Activated CD4-positive, alpha-beta T cell treated with anti-CD3 and anti-CD28 coated beads for 36 hours (primary cell): ENCODE measurements at regions of chr5 and their contacts with region 1.

Region 1: GRCh38 chr5:9644630-9645029 is 14.5 kb upstream of the TAS2R1 start:
- DNase-seq: no peak
- ATAC-seq: no peak
- H3K4me3 Mint-ChIP-seq: no peak overlapping the region
- H3K27ac Mint-ChIP-seq: no peak overlapping the region
- H3K4me1 Mint-ChIP-seq: no peaks in the 10 kb centered on the region
- H3K27me3 Mint-ChIP-seq: no peaks in the 10 kb centered on the region

Region 2: GRCh38 chr5:8135742-8136141 is 1508.9 kb before region 1 on chr5:
- CTCF ChIA-PET with region 1: no interaction called
- POLR2A ChIA-PET with region 1: interaction called, 10 read pairs
- intact Hi-C with region 1: no loop called
- DNase-seq: no peak
- ATAC-seq: no peak
- H3K4me3 Mint-ChIP-seq: no peak overlapping the region
- H3K27ac Mint-ChIP-seq: no peak overlapping the region
- H3K4me1 Mint-ChIP-seq: no peaks in the 10 kb centered on the region
- H3K27me3 Mint-ChIP-seq: no peaks in the 10 kb centered on the region

Region 3: DNA sequence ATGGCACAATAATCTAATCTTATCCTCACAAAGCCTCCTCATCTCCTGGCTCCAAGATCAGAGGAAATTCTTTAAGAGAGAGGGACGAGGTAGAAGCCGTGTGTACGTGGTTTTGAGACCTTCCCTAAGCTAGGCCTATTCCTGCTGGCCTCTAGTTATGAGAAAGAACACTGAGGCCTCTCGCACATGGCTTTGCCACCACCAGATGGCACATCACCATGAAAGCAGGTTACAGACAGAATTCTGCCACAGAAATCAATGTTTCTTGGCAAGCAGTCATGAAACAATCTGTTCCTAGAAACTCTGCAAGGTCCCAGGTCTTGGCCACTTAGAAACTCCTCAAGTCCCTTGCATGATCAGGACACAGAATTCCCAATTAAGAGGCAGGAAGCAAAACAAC is 253.7 kb after region 1 on chr5:
- CTCF ChIA-PET with region 1: no interaction called
- POLR2A ChIA-PET with region 1: no interaction called
- intact Hi-C with region 1: no loop called
- DNase-seq: peak; percentile 6
- ATAC-seq: no peak
- H3K4me3 Mint-ChIP-seq: no peak overlapping the region
- H3K27ac Mint-ChIP-seq: no peak overlapping the region
- H3K4me1 Mint-ChIP-seq: no peaks in the 10 kb centered on the region
- H3K27me3 Mint-ChIP-seq: no peaks in the 10 kb centered on the region